HEK293 (cell line): ENCODE measurements at regions of chr14 and their contacts with region 1.

Region 1: GRCh38 chr14:39169541-39169900 is 612 bp downstream of the TRAPPC6B start:
- H3K4me3 ChIP-seq: peak overlapping the region; percentile 80
- H3K27ac ChIP-seq: peak overlapping the region; percentile 93
- H3K4me1 ChIP-seq: peaks cover 4% of the 10 kb centered on the region
- CTCF ChIP-seq: no peak

Region 2: DNA sequence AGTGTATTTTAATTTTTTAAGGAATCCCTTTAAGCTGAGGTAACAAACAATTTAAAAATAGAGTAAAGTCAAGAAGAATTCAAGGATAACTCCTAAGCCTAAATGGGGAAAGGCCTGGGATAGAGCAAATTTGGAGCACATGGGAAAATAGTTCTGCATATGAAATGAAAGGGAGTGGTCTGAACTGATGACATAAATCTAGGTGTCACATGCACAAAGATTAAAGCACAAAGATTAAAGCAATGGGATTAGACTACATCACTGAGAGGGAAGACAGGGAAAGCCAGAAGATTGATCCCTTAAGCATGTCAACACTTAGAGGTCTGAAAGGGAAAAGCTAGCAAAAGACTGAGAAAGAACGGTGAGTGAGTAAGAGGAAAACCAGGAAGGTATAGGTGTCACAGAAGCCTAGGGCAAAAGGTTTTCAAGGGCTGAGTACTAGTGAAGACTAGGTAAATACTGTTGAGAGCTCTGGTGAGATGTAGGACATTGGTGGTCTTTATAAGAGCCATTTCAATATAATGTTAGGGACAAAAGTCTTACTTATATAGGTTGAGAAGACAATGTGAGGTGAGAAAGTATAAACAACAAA is 126.1 kb before region 1 on chr14:
- CTCF ChIA-PET with region 1: no interaction called
- POLR2A ChIA-PET with region 1: no interaction called
- H3K4me3 ChIP-seq: no peak overlapping the region
- H3K27ac ChIP-seq: no peak overlapping the region
- H3K4me1 ChIP-seq: no peaks in the 10 kb centered on the region
- CTCF ChIP-seq: no peak

Region 3: GRCh38 chr14:39114073-39114838 is 55.3 kb before region 1 on chr14 and contains the start of gene GEMIN2:
- CTCF ChIA-PET with region 1: no interaction called
- POLR2A ChIA-PET with region 1: interaction called, 55 read pairs
- H3K4me3 ChIP-seq: peak within 1 kb of the TSS; percentile 87
- H3K27ac ChIP-seq: peak within 1 kb of the TSS; percentile 28
- H3K4me1 ChIP-seq: no peaks in the 10 kb centered on the region
- CTCF ChIP-seq: no peak

Region 4: GRCh38 chr14:39154594-39155189 is 14.8 kb before region 1 on chr14:
- CTCF ChIA-PET with region 1: interaction called, 4 read pairs
- POLR2A ChIA-PET with region 1: interaction called, 18 read pairs
- H3K4me3 ChIP-seq: no peak overlapping the region
- H3K27ac ChIP-seq: no peak overlapping the region
- H3K4me1 ChIP-seq: no peaks in the 10 kb centered on the region
- CTCF ChIP-seq: no peak

Region 5: GRCh38 chr14:39266871-39267591 is 97.5 kb after region 1 on chr14:
- CTCF ChIA-PET with region 1: no interaction called
- POLR2A ChIA-PET with region 1: interaction called, 32 read pairs
- H3K4me3 ChIP-seq: peak overlapping the region; percentile 61
- H3K27ac ChIP-seq: peak overlapping the region; percentile 99
- H3K4me1 ChIP-seq: peaks cover 5% of the 10 kb centered on the region; the same call in 1 of the 2 replicates
- CTCF ChIP-seq: no peak